Pancreas (tissue), 10 donors: ENCODE measurements at regions of chr2 and their contacts with region 1.

Region 1: DNA sequence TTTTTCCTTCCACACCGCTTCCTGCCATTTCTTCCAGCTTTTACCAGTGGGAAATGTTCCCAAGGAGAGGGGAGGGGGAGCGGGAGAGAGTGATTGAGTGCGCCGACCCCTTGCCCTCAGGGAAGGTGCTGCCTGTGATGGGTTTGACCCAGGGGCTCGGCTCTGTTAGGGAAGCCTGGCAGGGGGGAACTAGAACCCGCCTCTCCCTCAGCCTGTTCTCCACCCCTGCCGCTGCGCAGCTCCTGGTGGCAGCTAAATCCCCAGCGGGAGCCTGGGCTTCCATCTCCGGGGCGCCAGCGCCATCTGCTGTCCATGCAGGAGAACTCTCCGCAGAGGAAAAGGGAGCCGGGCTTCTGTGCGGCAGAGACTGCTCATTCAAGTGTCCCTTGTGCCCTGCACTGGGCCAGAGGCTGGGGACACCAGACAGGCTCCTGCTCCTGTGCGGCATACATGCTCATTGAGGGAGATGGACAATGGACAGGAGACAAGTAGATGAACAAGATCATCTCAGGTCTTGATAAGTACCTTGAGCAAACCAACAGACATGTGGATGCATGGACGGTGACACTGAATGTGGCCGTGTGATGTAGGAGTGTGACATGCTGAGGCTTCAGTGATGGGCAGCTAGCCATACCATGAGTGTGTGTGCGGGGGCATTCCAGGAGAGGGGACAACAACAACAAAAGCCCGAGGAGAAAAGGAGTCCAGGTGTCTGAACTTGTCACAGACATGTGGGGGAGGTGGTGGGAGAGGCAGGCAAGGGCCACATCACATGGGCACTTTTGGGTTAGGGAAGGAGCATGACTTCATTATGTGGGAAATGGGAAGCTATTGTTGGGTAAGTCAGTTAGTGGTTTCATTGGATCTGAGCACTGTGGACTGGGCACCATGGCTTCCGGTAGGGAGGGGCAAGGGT is 13.3 kb downstream of the CHPF start:
- DNase-seq: peak; percentile 77 to 97 (median 89)
- ATAC-seq: peak; percentile 94 to 98 (median 95)
- H3K4me3 ChIP-seq: no peak overlapping the region
- H3K27ac ChIP-seq: no peak overlapping the region
- H3K4me1 ChIP-seq: no peaks in the 10 kb centered on the region
- H3K27me3 ChIP-seq: peaks cover 0 to 17% (median 0%) of the 10 kb centered on the region in 4 donors
- CTCF ChIP-seq: peak; percentile 93 to 99 (median 95)

Region 2: DNA sequence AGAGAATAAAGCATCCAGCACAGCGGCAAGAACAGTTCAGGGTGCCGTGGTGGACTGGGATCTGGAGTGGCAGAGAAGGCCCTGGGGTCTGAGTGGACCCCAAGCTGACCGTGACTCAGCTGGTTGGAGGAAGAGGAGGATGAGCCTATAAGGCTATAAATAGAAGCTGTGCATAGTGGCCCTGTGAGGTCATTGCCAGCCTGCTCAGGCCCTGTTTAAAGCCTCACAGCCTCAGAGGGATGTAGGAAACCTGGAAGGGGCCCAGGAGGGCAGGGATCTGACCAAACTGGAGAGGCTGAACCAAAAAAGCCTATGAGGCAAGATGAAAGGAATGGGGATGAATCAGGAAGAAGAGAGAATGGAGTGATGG is 123.5 kb before region 1 on chr2:
- intact Hi-C with region 1: loop called in 2 of 3 experiments (anchors 5 kb)
- DNase-seq: no peak
- ATAC-seq: no peak
- H3K4me3 ChIP-seq: no peak overlapping the region
- H3K27ac ChIP-seq: no peak overlapping the region
- H3K4me1 ChIP-seq: no peaks in the 10 kb centered on the region
- H3K27me3 ChIP-seq: no peaks in the 10 kb centered on the region
- CTCF ChIP-seq: no peak

Region 3: GRCh38 chr2:219459460-219460311 is 70.6 kb before region 1 on chr2:
- intact Hi-C with region 1: loop called in 1 of 3 experiments (anchors 10 kb)
- DNase-seq: peak; percentile 31 to 85 (median 64)
- ATAC-seq: peak; percentile 67 to 95 (median 88)
- H3K4me3 ChIP-seq: no peak overlapping the region
- H3K27ac ChIP-seq: no peak overlapping the region
- H3K4me1 ChIP-seq: no peaks in the 10 kb centered on the region
- H3K27me3 ChIP-seq: no peaks in the 10 kb centered on the region
- CTCF ChIP-seq: peak; percentile 75 to 90 (median 86)

Region 4: GRCh38 chr2:219469186-219469724 is 61.1 kb before region 1 on chr2:
- intact Hi-C with region 1: loop called in 2 of 3 experiments (anchors 5 to 10 kb)
- DNase-seq: no peak
- ATAC-seq: no peak
- H3K4me3 ChIP-seq: no peak overlapping the region
- H3K27ac ChIP-seq: no peak overlapping the region
- H3K4me1 ChIP-seq: no peaks in the 10 kb centered on the region
- H3K27me3 ChIP-seq: no peaks in the 10 kb centered on the region
- CTCF ChIP-seq: no peak

Region 5: GRCh38 chr2:219475697-219476651 is 54.3 kb before region 1 on chr2:
- intact Hi-C with region 1: loop called in 1 of 3 experiments (anchors 5 kb)
- DNase-seq: peak; percentile 55 to 94 (median 82)
- ATAC-seq: peak; percentile 78 to 99 (median 95)
- H3K4me3 ChIP-seq: no peak overlapping the region
- H3K27ac ChIP-seq: no peak overlapping the region
- H3K4me1 ChIP-seq: no peaks in the 10 kb centered on the region
- H3K27me3 ChIP-seq: no peaks in the 10 kb centered on the region
- CTCF ChIP-seq: peak; percentile 87 to 90 (median 88)

Region 6: DNA sequence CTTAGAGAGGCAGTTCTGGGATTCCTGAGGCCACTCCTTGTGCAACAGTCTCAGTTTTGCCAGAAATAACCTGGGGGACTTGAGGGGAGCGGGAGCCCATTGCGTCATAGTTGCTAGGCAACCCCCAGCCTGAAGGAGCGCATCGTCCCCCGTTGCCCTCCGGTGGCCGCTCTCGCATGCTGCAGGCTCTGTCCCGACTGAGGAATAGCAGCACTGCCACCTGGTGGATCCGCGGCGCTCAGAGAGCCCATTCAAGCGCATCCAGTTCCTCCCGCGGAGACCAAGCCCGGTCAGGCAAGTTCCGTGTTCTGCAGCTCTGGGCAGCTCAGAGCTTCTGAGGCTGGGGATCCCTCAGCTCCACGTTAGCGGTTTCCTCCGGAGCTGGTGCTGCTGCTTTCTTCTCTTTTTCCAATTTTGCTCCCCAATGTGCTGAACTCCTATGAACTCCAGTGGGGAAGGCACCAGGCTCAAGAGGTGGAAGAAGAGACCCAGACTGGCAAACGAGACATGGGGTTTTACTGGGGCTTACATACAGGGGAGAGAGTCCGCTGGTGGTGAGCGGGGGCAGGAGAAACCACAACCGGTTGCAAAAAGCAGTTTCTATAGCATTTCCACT is 112.3 kb after region 1 on chr2:
- intact Hi-C with region 1: loop called in 1 of 3 experiments (anchors 10 kb)
- DNase-seq: peak; percentile 92 to 98 (median 95)
- ATAC-seq: peak; percentile 97 to 100 (median 99)
- H3K4me3 ChIP-seq: no peak overlapping the region
- H3K27ac ChIP-seq: no peak overlapping the region
- H3K4me1 ChIP-seq: peaks cover 0 to 2% (median 0%) of the 10 kb centered on the region in 3 donors
- H3K27me3 ChIP-seq: no peaks in the 10 kb centered on the region
- CTCF ChIP-seq: peak; percentile 97 to 99 (median 98)